Astrocyte of the cerebellum (primary cell): ENCODE measurements at regions of chr16 and their contacts with region 1.

Region 1: GRCh38 chr16:9047686-9048301 is 43.6 kb upstream of the HAPSTR1 start:
- DNase-seq: peak; percentile 99
- H3K4me3 ChIP-seq: no peak overlapping the region
- CTCF ChIP-seq: no peak

Region 2: GRCh38 chr16:9102379-9102778 is 54.6 kb after region 1 on chr16:
- in situ Hi-C with region 1: loop called (anchors 5 kb)
- DNase-seq: peak; percentile 55
- H3K4me3 ChIP-seq: no peak overlapping the region
- CTCF ChIP-seq: no peak